Natural killer cell (primary cell): ENCODE measurements at regions of chr19 and their contacts with region 1.

Region 1: DNA sequence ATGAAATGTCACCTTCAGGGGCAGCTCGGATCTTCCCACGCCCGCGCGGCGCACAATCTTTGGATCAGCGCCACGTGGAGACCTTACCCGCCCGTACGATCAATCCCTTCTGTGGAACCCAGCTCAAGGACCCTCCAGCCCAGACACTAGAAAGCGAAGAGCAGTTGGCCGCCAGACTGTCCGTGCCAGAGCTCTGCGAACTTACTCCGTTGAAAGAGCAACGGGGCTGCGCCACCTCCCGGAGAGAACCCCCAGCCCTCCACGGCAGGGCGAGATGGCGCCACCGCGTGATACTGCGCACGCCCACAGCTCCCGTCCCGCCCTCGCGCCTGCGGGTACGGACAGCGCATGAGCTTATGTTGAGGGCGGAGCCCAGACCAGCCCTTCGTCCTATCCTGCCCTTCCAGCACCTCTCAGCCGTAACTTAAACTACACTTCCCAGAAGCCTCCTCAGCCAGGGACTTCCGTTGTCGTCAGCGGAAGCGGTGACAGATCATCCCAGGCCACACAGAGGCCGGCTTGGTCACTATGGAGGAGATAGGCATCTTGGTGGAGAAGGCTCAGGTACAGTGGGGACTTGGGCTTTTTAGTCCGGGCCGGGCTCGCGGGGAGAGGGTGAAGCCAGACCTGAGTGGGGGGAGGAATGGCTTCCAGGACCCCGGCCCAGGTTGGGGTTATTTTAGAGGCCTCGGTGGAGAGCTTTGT is at the start of gene PSMC4:
- DNase-seq: peak; percentile 98 to 100
- ATAC-seq: peak; percentile 95 to 100 (median 96)
- H3K4me3 ChIP-seq: peak within 1 kb of the TSS; percentile 68
- H3K4me3 Mint-ChIP-seq: peak within 1 kb of the TSS; percentile 99
- H3K27ac ChIP-seq: peak within 1 kb of the TSS; percentile 94
- H3K27ac Mint-ChIP-seq: peak within 1 kb of the TSS; percentile 99 to 100
- H3K4me1 ChIP-seq: peaks cover 32% of the 10 kb centered on the region
- H3K4me1 Mint-ChIP-seq: peaks cover 38 to 47% of the 10 kb centered on the region in 2 donors
- H3K27me3 ChIP-seq: no peaks in the 10 kb centered on the region
- H3K27me3 Mint-ChIP-seq: no peaks in the 10 kb centered on the region
- CTCF ChIP-seq: peak; percentile 72
- total RNA-seq, gene PSMC4: 84.9 to 116 (median 101) TPM

Region 2: GRCh38 chr19:39792999-39793546 is 177.8 kb before region 1 on chr19:
- intact Hi-C with region 1: loop called (anchors 1 kb)
- DNase-seq: peak; percentile 75 to 85
- ATAC-seq: peak; percentile 90 to 96 (median 96)
- H3K4me3 ChIP-seq: peak overlapping the region; percentile 45
- H3K4me3 Mint-ChIP-seq: peak overlapping the region; percentile 68
- H3K27ac ChIP-seq: no peak overlapping the region
- H3K27ac Mint-ChIP-seq: no peak overlapping the region
- H3K4me1 ChIP-seq: peaks cover 9% of the 10 kb centered on the region
- H3K4me1 Mint-ChIP-seq: peaks cover 0 to 5% of the 10 kb centered on the region in 2 donors
- H3K27me3 ChIP-seq: no peaks in the 10 kb centered on the region
- H3K27me3 Mint-ChIP-seq: peaks cover 14 to 18% of the 10 kb centered on the region in 2 donors
- CTCF ChIP-seq: peak; percentile 94

Region 3: GRCh38 chr19:39889872-39890545 is 80.8 kb before region 1 on chr19:
- intact Hi-C with region 1: loop called (anchors 5 kb)
- DNase-seq: no peak
- ATAC-seq: peak in 1 of 3 donors; percentile 14
- H3K4me3 ChIP-seq: no peak overlapping the region
- H3K4me3 Mint-ChIP-seq: no peak overlapping the region
- H3K27ac ChIP-seq: no peak overlapping the region
- H3K27ac Mint-ChIP-seq: no peak overlapping the region
- H3K4me1 ChIP-seq: peaks cover 20% of the 10 kb centered on the region
- H3K4me1 Mint-ChIP-seq: peaks cover 7 to 9% of the 10 kb centered on the region in 2 donors
- H3K27me3 ChIP-seq: no peaks in the 10 kb centered on the region
- H3K27me3 Mint-ChIP-seq: no peaks in the 10 kb centered on the region
- CTCF ChIP-seq: no peak

Region 4: DNA sequence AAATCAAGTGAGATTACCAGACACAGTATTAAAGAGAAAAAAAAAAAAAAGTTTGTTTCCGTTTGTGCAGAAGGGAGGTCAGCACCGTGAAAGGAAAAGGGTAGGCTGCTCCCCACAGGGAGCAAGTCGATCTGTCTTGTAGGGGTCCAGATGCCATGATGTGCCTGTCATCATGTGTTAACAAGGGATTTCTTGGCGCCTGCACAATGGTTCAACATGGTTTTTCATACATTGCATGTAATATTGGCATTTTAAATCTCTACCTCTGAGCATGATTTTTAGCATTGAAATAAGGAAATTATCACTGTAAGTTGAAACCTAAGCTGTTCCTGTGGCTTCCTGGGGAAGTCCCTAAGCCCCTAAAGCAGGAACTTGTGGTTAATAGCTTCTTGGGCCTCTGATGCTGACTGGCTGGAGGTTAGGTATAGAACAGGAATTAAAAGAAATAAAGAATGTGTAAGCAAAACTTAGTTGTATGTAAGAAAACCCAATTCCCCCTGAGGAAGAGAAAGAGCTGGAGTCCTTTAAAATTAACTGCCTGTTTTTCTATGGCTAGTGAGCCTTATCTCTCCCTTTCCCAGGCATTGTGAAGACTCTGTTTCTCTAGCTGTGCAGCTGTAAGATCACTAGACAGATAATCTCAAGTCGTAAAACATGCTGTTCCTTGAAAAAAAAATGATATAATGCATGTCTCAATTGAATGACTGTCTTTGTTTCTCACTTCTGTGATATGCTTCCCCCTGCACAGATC is 29.0 kb before region 1 on chr19:
- intact Hi-C with region 1: loop called (anchors 2 kb)
- DNase-seq: peak; percentile 49 to 89
- ATAC-seq: peak; percentile 65 to 88 (median 84)
- H3K4me3 ChIP-seq: peak overlapping the region; percentile 24
- H3K4me3 Mint-ChIP-seq: peak overlapping the region; percentile 91
- H3K27ac ChIP-seq: peak overlapping the region; percentile 94
- H3K27ac Mint-ChIP-seq: peak overlapping the region; percentile 89 to 97
- H3K4me1 ChIP-seq: peaks cover 59% of the 10 kb centered on the region
- H3K4me1 Mint-ChIP-seq: peaks cover 64 to 71% of the 10 kb centered on the region in 2 donors
- H3K27me3 ChIP-seq: no peaks in the 10 kb centered on the region
- H3K27me3 Mint-ChIP-seq: no peaks in the 10 kb centered on the region
- CTCF ChIP-seq: no peak

Region 5: GRCh38 chr19:39996811-39997594 is 26.2 kb after region 1 on chr19 and contains the start of gene ZNF546:
- intact Hi-C with region 1: loop called (anchors 1 kb)
- DNase-seq: peak; percentile 78 to 94
- ATAC-seq: peak; percentile 84 to 94 (median 89)
- H3K4me3 ChIP-seq: peak within 1 kb of the TSS; percentile 83
- H3K4me3 Mint-ChIP-seq: peak within 1 kb of the TSS; percentile 91
- H3K27ac ChIP-seq: peak within 1 kb of the TSS; percentile 86
- H3K27ac Mint-ChIP-seq: peak within 1 kb of the TSS; percentile 88 to 91
- H3K4me1 ChIP-seq: peaks cover 21% of the 10 kb centered on the region
- H3K4me1 Mint-ChIP-seq: peaks cover 29 to 30% of the 10 kb centered on the region in 2 donors
- H3K27me3 ChIP-seq: no peaks in the 10 kb centered on the region
- H3K27me3 Mint-ChIP-seq: no peaks in the 10 kb centered on the region
- CTCF ChIP-seq: no peak
- total RNA-seq, gene ZNF546: 3.3 to 4.0 (median 3.8) TPM